ENCODE measurements at regions of chr19 and their contacts with region 1.

Region 1: DNA sequence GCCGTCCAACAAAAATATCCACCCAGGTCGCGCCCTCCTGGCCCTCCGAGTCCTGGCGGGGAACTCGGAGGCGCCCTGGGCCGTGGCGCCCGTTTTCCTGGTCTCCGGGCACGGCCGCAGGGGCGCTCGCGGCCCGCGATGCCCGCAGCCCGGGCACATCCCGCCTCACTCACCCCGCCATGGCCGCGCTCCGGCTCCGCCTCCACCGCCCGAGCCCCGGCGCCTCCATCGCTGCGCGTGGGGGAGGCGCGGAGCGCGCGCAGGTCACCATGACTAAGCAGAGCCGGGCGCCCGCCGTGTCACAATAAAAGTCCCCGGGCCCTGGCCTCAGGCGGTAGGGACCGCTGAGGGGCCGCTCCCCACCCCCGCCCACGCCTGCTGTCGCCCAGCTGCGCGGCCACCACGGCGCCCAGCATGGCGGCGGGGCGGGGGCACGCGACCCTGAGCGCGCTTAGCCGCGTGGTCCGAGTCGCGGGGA is 593 bp downstream of the KEAP1 start:
- DNase-seq: peak; percentile 97
- H3K4me3 ChIP-seq: peak overlapping the region; percentile 87 to 95 (median 92)
- H3K27ac ChIP-seq: peak overlapping the region; percentile 95 to 99 (median 97)
- H3K4me1 ChIP-seq: peaks cover 16 to 33% of the 10 kb centered on the region in 2 donors
- H3K27me3 ChIP-seq: no peaks in the 10 kb centered on the region
- CTCF ChIP-seq: peak in 1 of 6 experiments; percentile 32
- POLR2A ChIP-seq: peak; percentile 11 to 87

Region 2: DNA sequence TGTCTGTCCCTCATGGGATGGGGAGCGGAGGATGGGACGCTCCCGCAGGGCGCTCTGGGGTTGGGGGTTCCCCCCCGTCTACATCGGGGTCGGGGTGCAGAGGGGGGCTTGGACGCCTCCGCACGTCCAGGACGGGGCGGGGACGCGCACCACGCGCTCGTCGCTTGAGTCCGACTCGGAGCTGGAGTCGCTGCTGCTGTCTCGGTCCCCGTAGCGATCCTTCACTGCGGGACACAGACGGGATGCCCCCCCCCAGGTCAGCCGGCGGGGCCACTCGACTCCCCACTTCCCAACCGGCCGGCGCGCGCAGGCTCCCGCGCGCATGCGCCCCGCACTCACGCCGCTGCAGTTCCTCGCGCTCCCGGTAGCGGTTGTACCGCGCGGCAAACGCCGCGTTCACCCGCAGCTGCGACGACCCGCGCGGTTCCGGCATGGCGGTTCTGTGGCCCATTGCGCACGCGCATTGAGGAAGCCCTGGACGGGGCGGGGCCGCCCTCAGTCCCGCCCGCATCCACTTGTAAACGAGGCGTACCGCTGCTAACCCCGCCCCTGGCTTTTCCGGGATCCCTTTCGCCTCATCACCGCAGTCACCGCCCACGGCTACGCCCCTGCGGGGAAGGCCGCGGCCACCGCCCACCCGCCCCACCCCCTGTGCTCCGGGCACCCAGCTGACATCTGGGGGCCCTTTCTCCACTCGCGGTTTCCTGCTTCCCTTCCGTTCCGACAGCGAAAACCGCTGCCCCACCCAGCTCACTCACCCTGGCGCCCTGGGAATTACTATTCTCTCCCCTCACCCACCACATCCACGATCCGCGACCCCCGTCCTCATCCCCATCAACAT is 63.2 kb after region 1 on chr19 and contains the start of gene KRI1:
- intact Hi-C with region 1: loop called (anchors 10 kb)
- DNase-seq: peak; percentile 97
- H3K4me3 ChIP-seq: peak within 1 kb of the TSS; percentile 45 to 81 (median 78)
- H3K27ac ChIP-seq: peak within 1 kb of the TSS; percentile 72 to 89 (median 76)
- H3K4me1 ChIP-seq: peaks cover 23 to 35% of the 10 kb centered on the region in 2 donors
- H3K27me3 ChIP-seq: no peaks in the 10 kb centered on the region
- CTCF ChIP-seq: peak in 3 of 6 experiments; percentile 11 to 42 (median 33)
- POLR2A ChIP-seq: peak; percentile 37 to 93
- total RNA-seq, gene KRI1: 17.3 to 49.7 (median 28.2) TPM

Region 3: DNA sequence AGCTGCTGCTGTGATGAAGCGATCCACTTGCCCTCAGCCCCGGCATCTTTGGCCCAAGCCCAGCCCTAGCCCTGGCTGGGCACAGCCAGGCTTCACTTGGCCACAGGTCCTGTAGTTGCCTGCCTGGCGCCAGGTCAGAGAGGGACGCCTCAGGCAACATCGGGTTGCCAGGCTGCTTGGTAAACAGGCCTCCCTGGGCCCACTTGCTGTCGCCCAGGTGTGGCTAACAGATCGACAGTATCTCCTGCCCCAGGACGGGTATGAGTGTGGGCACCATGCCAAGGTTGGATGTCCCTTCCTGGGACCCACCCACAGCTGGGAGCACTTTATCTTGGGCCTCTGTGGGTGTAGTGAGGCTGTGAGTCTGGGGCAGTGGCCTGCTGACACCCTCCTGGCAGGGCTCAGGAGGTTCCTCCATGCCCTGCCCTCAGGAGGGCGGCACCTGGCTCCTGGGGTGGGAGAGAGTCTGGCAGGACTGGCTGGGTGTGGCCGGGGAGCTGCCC is 396.6 kb after region 1 on chr19:
- intact Hi-C with region 1: no loop called
- DNase-seq: peak; percentile 37 to 64
- H3K4me3 ChIP-seq: no peak overlapping the region
- H3K27ac ChIP-seq: peak overlapping the region in 1 of 3 donors; percentile 48
- H3K4me1 ChIP-seq: peaks cover 6 to 15% of the 10 kb centered on the region in 2 donors
- H3K27me3 ChIP-seq: no peaks in the 10 kb centered on the region
- CTCF ChIP-seq: no peak
- POLR2A ChIP-seq: no peak